CD4-positive, alpha-beta memory T cell (primary cell): ENCODE measurements at regions of chr3 and their contacts with region 1.

Region 1: GRCh38 chr3:24680214-24680967 is 185.7 kb upstream of the THRB start:
- DNase-seq: peak in 3 of 5 donors; percentile 5 to 8 (median 6)
- H3K4me3 ChIP-seq: no peak overlapping the region
- H3K4me3 Mint-ChIP-seq: no peak overlapping the region
- H3K27ac ChIP-seq: no peak overlapping the region
- H3K27ac Mint-ChIP-seq: no peak overlapping the region
- H3K4me1 ChIP-seq: no peaks in the 10 kb centered on the region
- H3K4me1 Mint-ChIP-seq: peaks cover 0 to 7% (median 3%) of the 10 kb centered on the region in 4 donors
- H3K27me3 ChIP-seq: no peaks in the 10 kb centered on the region
- H3K27me3 Mint-ChIP-seq: peaks cover 0 to 1% of the 10 kb centered on the region in 2 donors

Region 2: DNA sequence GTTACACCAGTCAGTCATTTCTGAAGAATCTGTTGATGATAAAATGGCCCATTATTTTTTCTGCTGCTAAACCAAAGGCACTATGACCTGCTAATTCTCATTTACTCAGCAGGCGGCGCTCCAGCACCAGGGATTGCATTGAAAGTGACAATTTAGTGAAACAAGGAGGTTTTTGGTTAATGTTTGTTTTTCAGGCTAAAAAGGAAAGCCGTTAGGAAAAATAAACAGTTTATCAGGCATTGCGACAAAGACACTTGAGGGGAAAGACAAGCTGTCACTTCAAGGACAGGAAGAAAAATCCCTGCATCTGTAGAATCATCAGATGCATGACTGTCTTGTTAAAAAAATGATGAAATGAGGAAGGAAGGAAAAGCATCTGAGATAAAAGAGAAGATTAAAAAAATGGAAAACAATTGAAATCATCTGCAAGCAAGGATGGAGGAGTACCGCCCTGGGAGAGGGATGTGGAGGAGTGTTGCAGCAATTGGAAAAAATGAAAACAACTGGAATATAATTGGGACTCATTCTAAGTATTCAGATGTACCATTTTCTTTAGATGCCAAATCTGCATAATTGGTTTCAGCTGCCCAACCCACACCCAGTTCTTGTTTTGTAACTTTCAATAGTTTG is 681.3 kb before region 1 on chr3:
- CTCF ChIA-PET with region 1: no interaction called
- POLR2A ChIA-PET with region 1: no interaction called
- intact Hi-C with region 1: loop called (anchors 5 kb)
- DNase-seq: peak; percentile 26 to 56 (median 36)
- H3K4me3 ChIP-seq: no peak overlapping the region
- H3K4me3 Mint-ChIP-seq: no peak overlapping the region
- H3K27ac ChIP-seq: no peak overlapping the region
- H3K27ac Mint-ChIP-seq: no peak overlapping the region
- H3K4me1 ChIP-seq: no peaks in the 10 kb centered on the region
- H3K4me1 Mint-ChIP-seq: peaks cover 0 to 4% (median 0%) of the 10 kb centered on the region in 4 donors
- H3K27me3 ChIP-seq: no peaks in the 10 kb centered on the region
- H3K27me3 Mint-ChIP-seq: peaks cover 3 to 4% of the 10 kb centered on the region in 2 donors